Left cardiac atrium (tissue), 4 donors: ENCODE measurements at regions of chrX and their contacts with region 1.

Region 1: GRCh38 chrX:22192417-22193060 is 80.2 kb upstream of the CBLL2 start:
- DNase-seq: peak; percentile 67
- ATAC-seq: peak; percentile 71

Region 2: GRCh38 chrX:21985332-21985777 is 207.2 kb before region 1 on chrX:
- intact Hi-C with region 1: loop called in 1 of 2 experiments (anchors 10 kb)
- DNase-seq: peak; percentile 41
- ATAC-seq: peak; percentile 88

Region 3: GRCh38 chrX:22081475-22082092 is 111.0 kb before region 1 on chrX:
- intact Hi-C with region 1: loop called in 1 of 2 experiments (anchors 5 kb)
- DNase-seq: peak; percentile 34
- ATAC-seq: no peak

Region 4: DNA sequence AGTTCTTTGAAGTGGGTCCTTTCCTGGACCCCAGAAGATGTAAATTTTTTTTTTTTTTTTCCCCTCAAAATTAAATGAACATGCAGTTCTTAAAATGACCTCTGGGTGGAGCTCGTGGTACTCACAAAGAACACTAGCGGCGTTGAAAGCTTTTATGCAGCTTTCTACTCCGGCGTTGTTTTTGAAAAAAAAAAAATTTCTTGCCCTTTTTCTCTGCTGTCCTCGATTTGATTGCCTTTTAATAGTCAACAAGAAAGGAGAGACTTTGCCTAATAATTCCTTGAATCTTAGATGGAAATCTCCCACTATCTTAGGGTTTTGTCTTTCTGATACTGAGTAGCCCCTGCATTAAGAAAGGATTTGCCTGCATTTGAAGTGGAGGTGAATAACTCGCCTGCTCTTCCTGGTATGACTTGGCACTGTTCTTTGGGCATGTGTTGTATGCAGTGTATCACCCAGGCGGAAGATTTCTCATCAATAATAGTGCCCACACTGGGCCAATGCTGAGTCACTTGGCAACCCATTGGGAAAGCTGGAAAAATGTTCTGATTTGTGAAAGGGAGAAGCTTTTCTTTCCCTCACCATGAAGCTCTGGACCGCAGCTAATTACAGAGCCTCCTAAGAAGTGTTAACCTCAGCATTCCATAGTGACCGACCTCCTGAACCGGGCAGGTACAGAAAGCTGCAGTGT is 56.4 kb before region 1 on chrX:
- intact Hi-C with region 1: loop called in 1 of 2 experiments (anchors 5 kb)
- DNase-seq: no peak
- ATAC-seq: peak; percentile 51 to 71